T-cell (primary cell): ENCODE measurements at regions of chr14 and their contacts with region 1.

Region 1: DNA sequence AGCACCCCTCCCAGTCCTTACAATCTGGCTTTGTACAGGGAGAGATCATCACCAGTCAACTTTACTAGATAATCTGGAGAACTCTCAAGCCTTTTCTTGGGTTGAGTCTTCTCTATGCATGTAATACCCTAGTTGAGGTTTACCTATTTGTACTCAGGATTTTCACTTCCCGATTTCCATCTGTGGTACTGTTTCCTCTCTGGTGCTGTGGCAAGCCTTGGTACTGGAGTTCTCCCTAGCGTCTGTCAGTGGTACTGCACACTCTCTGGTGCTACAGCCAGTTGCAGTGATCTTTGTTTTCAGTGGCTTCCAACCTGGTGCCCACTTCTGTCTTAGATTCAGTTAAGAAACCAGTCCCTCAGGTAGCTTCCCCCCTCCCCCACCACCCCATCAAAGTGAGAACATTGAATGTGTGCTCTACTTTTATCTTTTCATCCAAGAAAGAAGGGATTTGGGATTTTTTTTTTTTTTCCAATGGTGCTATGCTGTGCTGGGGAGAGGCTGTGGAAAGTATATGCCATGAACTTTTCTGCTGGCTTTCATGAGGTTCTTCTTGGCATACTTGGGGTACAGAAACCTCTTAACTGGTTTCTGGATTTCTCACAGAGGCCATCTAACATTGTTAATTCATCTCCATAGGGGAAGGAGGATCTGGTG is 69.4 kb upstream of the EVL start:
- DNase-seq: peak in 34 of 35 experiments; percentile 11 to 82 (median 53)
- ATAC-seq: peak; percentile 82 to 94 (median 88)
- H3K4me3 ChIP-seq: no peak overlapping the region
- H3K4me3 Mint-ChIP-seq: no peak overlapping the region
- H3K27ac ChIP-seq: no peak overlapping the region
- H3K27ac Mint-ChIP-seq: no peak overlapping the region
- H3K4me1 ChIP-seq: no peaks in the 10 kb centered on the region
- H3K4me1 Mint-ChIP-seq: peaks cover 0 to 8% (median 3%) of the 10 kb centered on the region in 3 donors
- H3K27me3 ChIP-seq: peaks cover 0 to 3% of the 10 kb centered on the region in 2 experiments
- H3K27me3 Mint-ChIP-seq: peaks cover 4 to 9% of the 10 kb centered on the region in 2 donors

Region 2: DNA sequence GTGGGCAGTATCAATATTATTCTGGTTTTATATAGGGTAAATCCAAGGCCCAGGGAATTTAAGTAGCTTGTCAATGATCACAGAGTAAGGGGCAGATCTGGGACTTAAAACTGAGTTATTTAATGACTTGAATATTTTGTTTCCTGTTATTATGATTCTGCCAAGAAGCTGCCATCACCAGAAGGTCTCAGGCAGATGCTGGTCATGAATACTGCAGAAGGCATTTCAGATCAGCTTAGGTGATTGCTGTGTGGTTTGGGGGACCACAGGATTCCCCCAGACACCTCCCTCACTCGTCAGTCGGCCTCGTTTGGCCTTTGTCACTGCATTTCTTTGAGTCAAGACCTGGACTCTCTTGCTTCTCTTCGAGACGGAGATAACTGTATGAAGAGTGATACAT is 21.7 kb after region 1 on chr14:
- CTCF ChIA-PET with region 1: interaction called in 1 of 2 experiments, 7 read pairs
- POLR2A ChIA-PET with region 1: interaction called in 1 of 2 experiments, 33 read pairs
- DNase-seq: no peak
- ATAC-seq: no peak
- H3K4me3 ChIP-seq: no peak overlapping the region
- H3K4me3 Mint-ChIP-seq: no peak overlapping the region
- H3K27ac ChIP-seq: no peak overlapping the region
- H3K27ac Mint-ChIP-seq: no peak overlapping the region
- H3K4me1 ChIP-seq: peaks cover 0 to 1% of the 10 kb centered on the region in 2 experiments
- H3K4me1 Mint-ChIP-seq: peaks cover 0 to 4% (median 3%) of the 10 kb centered on the region in 3 donors
- H3K27me3 ChIP-seq: no peaks in the 10 kb centered on the region
- H3K27me3 Mint-ChIP-seq: no peaks in the 10 kb centered on the region

Region 3: GRCh38 chr14:100037353-100037752 is 41.5 kb after region 1 on chr14:
- CTCF ChIA-PET with region 1: no interaction called
- POLR2A ChIA-PET with region 1: no interaction called
- DNase-seq: no peak
- ATAC-seq: no peak
- H3K4me3 ChIP-seq: no peak overlapping the region
- H3K4me3 Mint-ChIP-seq: no peak overlapping the region
- H3K27ac ChIP-seq: no peak overlapping the region
- H3K27ac Mint-ChIP-seq: no peak overlapping the region
- H3K4me1 ChIP-seq: no peaks in the 10 kb centered on the region
- H3K4me1 Mint-ChIP-seq: peaks cover 0 to 7% (median 2%) of the 10 kb centered on the region in 3 donors
- H3K27me3 ChIP-seq: no peaks in the 10 kb centered on the region
- H3K27me3 Mint-ChIP-seq: no peaks in the 10 kb centered on the region